AG04450 (cell line): ENCODE measurements at regions of chr7 and their contacts with region 1.

Region 1: DNA sequence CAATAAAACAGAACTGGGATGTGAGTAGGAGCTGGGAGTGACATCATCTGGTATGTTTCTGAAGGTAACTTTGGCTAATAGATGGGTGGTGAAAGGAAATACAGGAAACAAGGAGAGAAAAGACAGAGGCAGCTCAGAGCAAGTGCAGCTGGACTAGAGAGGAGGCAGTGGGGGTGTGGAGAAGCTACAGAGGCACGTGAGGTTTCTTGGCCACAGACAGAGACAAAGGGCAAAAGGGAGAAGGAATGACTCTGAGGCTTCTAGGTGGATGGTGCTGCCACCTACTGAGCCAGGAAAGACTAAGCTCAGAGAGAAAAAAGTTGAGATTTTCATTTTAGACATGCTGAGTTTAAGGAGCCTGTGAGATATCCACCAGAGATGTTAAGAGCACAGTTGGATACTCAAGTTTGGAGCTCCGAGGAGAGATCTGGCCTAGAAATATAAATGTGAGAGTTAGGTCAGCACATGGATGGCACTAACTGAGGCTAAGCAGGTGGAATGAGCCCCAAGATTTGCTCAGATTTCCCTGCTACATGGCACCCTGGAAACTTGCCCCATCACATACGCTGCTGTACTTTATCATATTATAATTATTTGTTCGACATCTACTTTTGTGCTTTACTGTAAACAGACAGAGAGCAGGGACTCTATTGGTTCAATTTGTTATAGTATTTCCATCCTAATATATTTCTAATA is 293.0 kb upstream of the IMMP2L start:
- DNase-seq: peak; percentile 68
- H3K4me3 ChIP-seq: no peak overlapping the region
- H3K27ac ChIP-seq: no peak overlapping the region
- H3K27me3 ChIP-seq: no peaks in the 10 kb centered on the region
- CTCF ChIP-seq: peak; percentile 82

Region 2: DNA sequence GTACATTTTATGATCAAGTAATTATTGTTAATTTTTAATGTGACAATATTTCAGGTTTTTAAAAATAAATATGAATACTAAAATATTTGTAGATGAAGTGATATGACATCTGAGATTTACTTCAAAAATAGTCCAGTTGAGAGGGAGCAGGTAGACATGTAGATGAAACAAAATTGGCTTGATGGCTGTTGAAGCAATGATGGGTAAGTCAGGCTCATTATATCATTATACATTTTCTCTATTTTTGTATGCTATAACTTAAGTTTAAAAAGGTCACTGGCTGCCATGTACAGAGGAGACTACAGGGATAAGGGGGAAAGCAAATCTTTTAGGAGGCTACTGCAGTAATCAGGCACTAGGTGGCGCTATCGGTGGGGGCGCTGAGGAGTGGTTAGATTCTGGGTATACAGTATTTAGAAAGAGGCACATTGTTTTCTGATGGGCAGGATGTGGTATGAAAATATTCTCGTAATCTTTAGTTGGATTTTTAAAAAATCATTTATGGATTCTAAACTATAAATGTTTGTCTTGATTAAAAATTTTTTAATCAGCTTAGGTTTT is 103.2 kb before region 1 on chr7:
- CTCF ChIA-PET with region 1: interaction called, 83 read pairs
- POLR2A ChIA-PET with region 1: no interaction called
- DNase-seq: no peak
- H3K4me3 ChIP-seq: no peak overlapping the region
- H3K27ac ChIP-seq: no peak overlapping the region
- H3K27me3 ChIP-seq: no peaks in the 10 kb centered on the region
- CTCF ChIP-seq: peak; percentile 92

Region 3: DNA sequence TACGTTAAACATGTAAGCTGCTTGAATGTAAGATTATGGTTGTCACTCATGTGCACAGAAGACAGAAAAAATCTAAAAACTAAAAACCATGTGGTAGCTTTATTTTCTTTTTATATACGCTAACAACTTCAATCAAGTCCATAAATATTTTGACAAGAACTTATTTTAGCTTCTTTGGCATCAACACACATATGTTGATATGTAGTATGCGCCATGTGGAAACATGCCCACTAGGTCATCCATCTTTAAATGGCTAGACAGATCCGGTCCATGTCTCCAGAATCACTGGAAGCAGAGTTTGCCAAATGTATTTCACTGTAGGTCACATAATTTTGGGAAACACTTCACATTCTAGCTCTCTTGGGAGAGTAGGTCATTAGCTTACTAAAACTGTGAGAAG is 31.5 kb before region 1 on chr7:
- CTCF ChIA-PET with region 1: interaction called, 10 read pairs
- POLR2A ChIA-PET with region 1: no interaction called
- DNase-seq: no peak
- H3K4me3 ChIP-seq: no peak overlapping the region
- H3K27ac ChIP-seq: no peak overlapping the region
- H3K27me3 ChIP-seq: no peaks in the 10 kb centered on the region
- CTCF ChIP-seq: no peak

Region 4: GRCh38 chr7:111841596-111842205 is 13.6 kb before region 1 on chr7:
- CTCF ChIA-PET with region 1: interaction called, 22 read pairs
- POLR2A ChIA-PET with region 1: no interaction called
- DNase-seq: no peak
- H3K4me3 ChIP-seq: no peak overlapping the region
- H3K27ac ChIP-seq: no peak overlapping the region
- H3K27me3 ChIP-seq: no peaks in the 10 kb centered on the region
- CTCF ChIP-seq: no peak

Region 5: GRCh38 chr7:111878785-111879184 is 23.5 kb after region 1 on chr7:
- CTCF ChIA-PET with region 1: interaction called, 11 read pairs
- POLR2A ChIA-PET with region 1: no interaction called
- DNase-seq: no peak
- H3K4me3 ChIP-seq: no peak overlapping the region
- H3K27ac ChIP-seq: no peak overlapping the region
- H3K27me3 ChIP-seq: no peaks in the 10 kb centered on the region
- CTCF ChIP-seq: no peak

Region 6: DNA sequence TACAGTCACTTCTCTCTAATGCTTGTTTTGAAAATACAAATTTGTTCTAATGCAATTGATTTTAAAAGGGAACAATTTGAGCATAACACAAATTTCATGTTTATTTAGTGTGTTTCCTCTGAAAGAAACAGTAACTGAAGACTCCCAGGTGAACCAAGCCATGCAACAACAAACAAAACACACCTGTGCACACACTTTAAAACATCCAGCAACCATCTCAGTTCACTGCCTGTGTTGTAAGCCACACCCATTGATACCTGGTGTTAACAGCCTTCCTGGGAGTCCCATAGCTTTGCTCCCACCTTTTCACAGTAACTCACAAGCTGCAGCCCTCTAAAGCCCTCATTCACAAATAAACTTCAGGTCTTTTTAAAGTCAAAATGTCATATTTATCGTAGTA is 261.6 kb after region 1 on chr7:
- CTCF ChIA-PET with region 1: no interaction called
- POLR2A ChIA-PET with region 1: no interaction called
- DNase-seq: no peak
- H3K4me3 ChIP-seq: no peak overlapping the region
- H3K27ac ChIP-seq: no peak overlapping the region
- H3K27me3 ChIP-seq: no peaks in the 10 kb centered on the region
- CTCF ChIP-seq: no peak

Region 7: GRCh38 chr7:112411186-112411795 is 556.0 kb after region 1 on chr7:
- CTCF ChIA-PET with region 1: interaction called, 12 read pairs
- POLR2A ChIA-PET with region 1: no interaction called
- DNase-seq: no peak
- H3K4me3 ChIP-seq: no peak overlapping the region
- H3K27ac ChIP-seq: no peak overlapping the region
- H3K27me3 ChIP-seq: peaks cover 7% of the 10 kb centered on the region
- CTCF ChIP-seq: peak; percentile 78